Sciatic nerve (tissue), 2 donors: ENCODE measurements at regions of chr15 and their contacts with region 1.

Region 1: DNA sequence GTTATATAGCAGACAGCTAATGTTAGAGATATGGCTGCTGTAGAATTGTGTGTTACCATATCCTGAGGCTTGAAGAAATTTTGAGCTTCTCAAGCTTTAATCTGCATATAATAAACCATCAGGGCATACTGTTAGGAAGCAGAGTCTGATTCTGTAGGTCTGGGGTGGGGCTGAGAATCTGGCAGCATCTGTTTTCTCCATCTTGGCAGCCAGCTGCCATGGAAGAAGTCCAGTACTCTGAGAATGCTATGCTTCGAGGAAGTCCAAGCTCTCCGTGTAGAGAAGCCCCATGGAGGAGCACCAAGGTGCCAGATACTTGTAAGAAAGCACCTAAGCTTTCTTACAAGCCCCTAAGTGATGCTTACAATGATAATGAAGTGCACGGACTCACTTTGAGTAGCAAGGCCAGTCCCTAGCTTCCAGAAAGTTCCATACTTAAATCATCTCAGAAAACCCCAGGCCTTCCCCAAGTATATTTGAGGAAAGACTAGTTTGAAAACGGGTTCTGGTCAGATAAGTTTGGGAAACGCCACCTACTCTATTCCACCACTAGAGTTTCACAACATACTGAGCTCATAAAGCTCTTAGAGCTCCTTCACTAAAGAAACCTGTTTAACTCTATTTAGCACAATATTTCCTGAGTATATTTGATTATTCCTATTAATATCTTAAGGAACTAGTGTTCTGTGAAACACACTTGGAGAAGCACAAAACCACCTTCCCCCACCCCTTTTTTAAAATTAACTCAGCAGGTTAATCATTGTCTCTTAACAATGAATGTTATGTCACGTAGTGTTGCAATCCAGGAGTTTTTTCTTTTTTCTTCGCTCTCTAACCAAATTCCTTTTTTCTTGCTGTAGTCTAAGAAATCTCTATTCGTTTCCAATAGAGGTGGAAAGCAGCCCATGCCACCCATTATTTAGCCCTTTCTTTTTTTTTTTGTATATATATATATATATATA is 59.9 kb upstream of the RASGRP1 start:
- DNase-seq: no peak
- ATAC-seq: no peak

Region 2: GRCh38 chr15:38733331-38733730 is 108.8 kb after region 1 on chr15:
- intact Hi-C with region 1: no loop called
- DNase-seq: no peak
- ATAC-seq: no peak

Region 3: DNA sequence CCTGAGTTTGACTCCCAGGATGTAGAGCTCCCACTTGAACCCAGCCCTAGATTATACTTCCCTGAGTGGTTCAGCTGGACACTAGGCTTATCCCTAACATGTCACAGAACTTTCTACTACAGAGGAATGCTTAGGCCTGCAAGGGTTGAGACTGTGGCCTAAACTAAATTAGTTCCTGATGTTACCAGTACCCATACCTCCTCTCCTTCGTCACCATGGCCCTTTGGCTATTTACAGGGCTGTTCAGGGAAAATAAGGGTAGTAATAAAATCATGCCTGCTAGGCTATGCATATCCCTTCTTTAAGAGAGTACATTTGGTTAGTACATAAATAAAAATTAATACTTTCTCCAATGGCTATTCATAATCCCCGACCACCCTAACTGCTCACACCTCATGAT is 296.4 kb after region 1 on chr15:
- intact Hi-C with region 1: loop called (anchors 5 kb)
- DNase-seq: no peak
- ATAC-seq: no peak

Region 4: GRCh38 chr15:40536501-40536900 is 1912.0 kb after region 1 on chr15:
- intact Hi-C with region 1: no loop called
- DNase-seq: no peak
- ATAC-seq: no peak